ENCODE measurements at regions of chr9 and their contacts with region 1.

Region 1: DNA sequence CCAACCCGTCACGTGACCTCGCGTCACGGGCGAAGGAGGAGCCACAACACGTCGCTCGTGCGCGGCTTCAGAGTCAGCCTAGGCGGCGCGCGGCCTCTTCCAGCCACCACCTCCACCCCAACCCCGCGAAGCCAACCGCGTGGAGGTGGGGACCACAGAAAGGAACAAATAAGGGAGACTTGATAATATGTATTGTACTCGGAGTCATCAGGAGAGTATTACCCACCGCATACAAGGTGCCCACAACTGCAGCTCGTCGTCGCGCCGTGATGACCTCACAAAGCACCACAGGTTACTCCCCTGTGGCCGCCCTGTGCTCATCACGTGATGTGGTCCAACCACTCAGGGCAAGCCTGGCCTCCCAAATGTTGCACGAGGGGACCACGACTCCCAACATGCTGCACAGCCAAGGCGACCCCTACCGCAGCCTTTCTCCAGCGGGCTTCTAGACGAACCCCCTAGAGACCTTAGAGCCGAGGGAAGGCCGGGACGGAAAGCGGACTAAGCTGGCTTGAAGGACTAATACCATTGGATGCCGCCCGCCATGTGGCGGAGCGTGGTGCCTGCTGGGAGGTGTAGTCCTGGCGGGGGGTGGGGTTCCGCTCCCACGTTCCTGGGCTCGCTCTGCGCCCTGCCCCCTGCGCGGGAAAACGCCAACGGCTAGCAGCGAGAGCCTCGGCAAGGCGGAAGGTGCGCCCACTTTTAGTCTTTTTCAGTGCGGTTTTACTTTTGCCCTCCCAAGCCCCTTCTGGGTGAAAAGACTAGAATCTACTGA is 423 bp upstream of the UBAP2 start:
- DNase-seq: peak; percentile 96 to 99
- H3K4me3 ChIP-seq: peak overlapping the region; percentile 99
- H3K4me3 Mint-ChIP-seq: peak overlapping the region; percentile 100
- H3K27ac Mint-ChIP-seq: peak overlapping the region; percentile 100
- H3K4me1 ChIP-seq: peaks cover 18% of the 10 kb centered on the region
- H3K4me1 Mint-ChIP-seq: peaks cover 17% of the 10 kb centered on the region
- H3K27me3 ChIP-seq: no peaks in the 10 kb centered on the region
- H3K27me3 Mint-ChIP-seq: no peaks in the 10 kb centered on the region
- CTCF ChIP-seq: no peak

Region 2: GRCh38 chr9:34035656-34036055 is 13.5 kb before region 1 on chr9:
- CTCF ChIA-PET with region 1: interaction called, 3 read pairs
- POLR2A ChIA-PET with region 1: interaction called, 3 read pairs
- intact Hi-C with region 1: loop called (anchors 1 kb)
- DNase-seq: peak; percentile 55 to 67
- H3K4me3 ChIP-seq: no peak overlapping the region
- H3K4me3 Mint-ChIP-seq: peak overlapping the region; percentile 60
- H3K27ac Mint-ChIP-seq: peak overlapping the region; percentile 75
- H3K4me1 ChIP-seq: peaks cover 42% of the 10 kb centered on the region
- H3K4me1 Mint-ChIP-seq: peaks cover 22% of the 10 kb centered on the region
- H3K27me3 ChIP-seq: no peaks in the 10 kb centered on the region
- H3K27me3 Mint-ChIP-seq: no peaks in the 10 kb centered on the region
- CTCF ChIP-seq: no peak

Region 3: GRCh38 chr9:34686231-34686630 is 637.1 kb after region 1 on chr9:
- CTCF ChIA-PET with region 1: no interaction called
- POLR2A ChIA-PET with region 1: no interaction called
- intact Hi-C with region 1: no loop called
- DNase-seq: no peak
- H3K4me3 ChIP-seq: no peak overlapping the region
- H3K4me3 Mint-ChIP-seq: no peak overlapping the region
- H3K27ac Mint-ChIP-seq: no peak overlapping the region
- H3K4me1 ChIP-seq: peaks cover 4% of the 10 kb centered on the region; the same call in 1 of the 2 replicates
- H3K4me1 Mint-ChIP-seq: peaks cover 6% of the 10 kb centered on the region
- H3K27me3 ChIP-seq: no peaks in the 10 kb centered on the region
- H3K27me3 Mint-ChIP-seq: no peaks in the 10 kb centered on the region
- CTCF ChIP-seq: no peak

Region 4: DNA sequence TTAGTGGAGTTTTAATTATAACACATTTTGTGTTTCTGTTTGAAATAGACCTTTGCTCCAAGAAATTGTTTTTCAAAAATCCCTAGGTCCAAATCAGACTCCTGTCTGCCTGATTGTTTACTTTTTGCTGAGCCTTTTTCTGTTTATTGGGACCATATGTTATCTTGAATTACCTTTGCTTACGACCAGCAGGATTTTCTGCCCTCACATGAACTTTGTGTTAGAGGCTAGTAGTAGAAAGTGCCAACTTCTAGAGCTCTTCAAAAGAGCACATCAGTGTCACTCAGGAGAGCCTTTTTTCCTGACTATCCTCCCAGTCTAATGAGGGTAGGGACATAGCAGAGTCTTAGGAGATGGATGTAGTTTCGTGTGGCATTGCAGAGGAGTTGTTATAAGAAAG is 1997.8 kb after region 1 on chr9:
- CTCF ChIA-PET with region 1: no interaction called
- POLR2A ChIA-PET with region 1: interaction called, 13 read pairs
- intact Hi-C with region 1: no loop called
- DNase-seq: no peak
- H3K4me3 ChIP-seq: no peak overlapping the region
- H3K4me3 Mint-ChIP-seq: no peak overlapping the region
- H3K27ac Mint-ChIP-seq: no peak overlapping the region
- H3K4me1 ChIP-seq: no peaks in the 10 kb centered on the region
- H3K4me1 Mint-ChIP-seq: no peaks in the 10 kb centered on the region
- H3K27me3 ChIP-seq: no peaks in the 10 kb centered on the region
- H3K27me3 Mint-ChIP-seq: no peaks in the 10 kb centered on the region
- CTCF ChIP-seq: no peak